B cell (primary cell): ENCODE measurements at regions of chr14 and their contacts with region 1.

Region 1: GRCh38 chr14:100213956-100214774 is 24.8 kb upstream of the YY1 start:
- DNase-seq: peak; percentile 92
- ATAC-seq: peak; percentile 96
- H3K4me3 ChIP-seq: peak overlapping the region; percentile 17 to 91 (median 90)
- H3K4me3 Mint-ChIP-seq: peak overlapping the region; percentile 87
- H3K27ac ChIP-seq: peak overlapping the region; percentile 77 to 78
- H3K27ac Mint-ChIP-seq: peak overlapping the region; percentile 89
- H3K4me1 ChIP-seq: peaks cover 12 to 15% of the 10 kb centered on the region in 2 donors
- H3K4me1 Mint-ChIP-seq: peaks cover 16% of the 10 kb centered on the region
- H3K27me3 ChIP-seq: no peaks in the 10 kb centered on the region
- H3K27me3 Mint-ChIP-seq: no peaks in the 10 kb centered on the region
- CTCF ChIP-seq: no peak

Region 2: GRCh38 chr14:100049220-100049619 is 164.9 kb before region 1 on chr14:
- CTCF ChIA-PET with region 1: no interaction called
- POLR2A ChIA-PET with region 1: no interaction called
- intact Hi-C with region 1: no loop called
- DNase-seq: no peak
- ATAC-seq: no peak
- H3K4me3 ChIP-seq: no peak overlapping the region
- H3K4me3 Mint-ChIP-seq: no peak overlapping the region
- H3K27ac ChIP-seq: no peak overlapping the region
- H3K27ac Mint-ChIP-seq: no peak overlapping the region
- H3K4me1 ChIP-seq: no peaks in the 10 kb centered on the region
- H3K4me1 Mint-ChIP-seq: no peaks in the 10 kb centered on the region
- H3K27me3 ChIP-seq: no peaks in the 10 kb centered on the region
- H3K27me3 Mint-ChIP-seq: no peaks in the 10 kb centered on the region
- CTCF ChIP-seq: no peak

Region 3: GRCh38 chr14:100155042-100155846 is 58.9 kb before region 1 on chr14:
- CTCF ChIA-PET with region 1: no interaction called
- POLR2A ChIA-PET with region 1: no interaction called
- intact Hi-C with region 1: loop called (anchors 1 kb)
- DNase-seq: no peak
- ATAC-seq: no peak
- H3K4me3 ChIP-seq: no peak overlapping the region
- H3K4me3 Mint-ChIP-seq: no peak overlapping the region
- H3K27ac ChIP-seq: no peak overlapping the region
- H3K27ac Mint-ChIP-seq: peak overlapping the region; percentile 53
- H3K4me1 ChIP-seq: peaks cover 29 to 39% of the 10 kb centered on the region in 2 donors
- H3K4me1 Mint-ChIP-seq: peaks cover 33% of the 10 kb centered on the region
- H3K27me3 ChIP-seq: peaks cover 0 to 2% (median 0%) of the 10 kb centered on the region in 4 experiments
- H3K27me3 Mint-ChIP-seq: no peaks in the 10 kb centered on the region
- CTCF ChIP-seq: peak; percentile 65

Region 4: DNA sequence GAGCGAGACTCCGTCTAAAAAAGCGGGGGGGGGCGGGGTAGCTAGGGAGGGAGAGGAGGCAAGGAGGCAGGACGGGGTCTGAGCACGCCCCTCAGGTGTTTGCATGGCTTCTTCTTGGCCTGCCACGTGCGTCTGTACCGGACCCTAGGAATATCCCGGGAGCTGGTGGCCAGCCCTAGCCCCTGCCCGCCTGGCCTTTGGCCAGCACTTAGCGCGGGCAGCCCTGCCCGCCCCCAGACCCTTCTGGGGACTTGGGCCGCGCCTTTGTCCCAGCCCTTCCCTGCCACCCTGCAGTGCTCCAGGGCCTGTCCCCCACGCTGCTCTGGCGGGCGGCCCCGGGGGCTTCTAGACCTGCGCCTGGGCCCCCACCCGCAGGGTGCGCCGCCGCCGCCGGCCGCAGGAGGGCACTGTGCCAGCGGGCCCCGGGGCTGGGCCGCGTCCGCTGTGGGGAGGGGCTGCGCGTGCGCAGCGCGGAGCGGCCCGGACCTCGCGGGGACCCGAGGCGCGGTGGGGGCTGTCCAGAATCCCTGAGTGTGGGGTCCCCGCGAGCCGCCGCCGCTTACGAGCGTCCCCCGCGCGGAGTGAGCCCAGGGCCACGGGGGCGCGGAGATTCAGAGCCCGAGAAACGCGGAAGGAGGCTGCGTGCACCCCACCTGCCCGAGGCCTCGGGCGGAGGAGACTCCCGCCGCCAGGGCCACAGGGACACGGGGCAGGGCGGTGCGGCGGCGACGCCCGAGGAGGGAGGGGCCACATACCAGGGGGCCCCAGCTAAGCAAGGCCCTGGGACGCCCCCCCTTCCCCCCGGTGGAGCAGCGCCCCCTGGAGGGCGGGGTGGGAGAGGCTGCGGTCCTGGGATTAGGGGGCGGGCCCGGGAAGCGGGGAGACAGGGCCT is 71.1 kb after region 1 on chr14:
- CTCF ChIA-PET with region 1: no interaction called
- POLR2A ChIA-PET with region 1: no interaction called
- intact Hi-C with region 1: no loop called
- DNase-seq: peak; percentile 89
- ATAC-seq: peak; percentile 91
- H3K4me3 ChIP-seq: peak overlapping the region in 4 of 5 experiments; percentile 74 to 89 (median 82)
- H3K4me3 Mint-ChIP-seq: peak overlapping the region; percentile 84
- H3K27ac ChIP-seq: peak overlapping the region; percentile 80 to 90
- H3K27ac Mint-ChIP-seq: peak overlapping the region; percentile 79
- H3K4me1 ChIP-seq: peaks cover 12% of the 10 kb centered on the region in 2 donors
- H3K4me1 Mint-ChIP-seq: peaks cover 13% of the 10 kb centered on the region
- H3K27me3 ChIP-seq: no peaks in the 10 kb centered on the region
- H3K27me3 Mint-ChIP-seq: no peaks in the 10 kb centered on the region
- CTCF ChIP-seq: peak; percentile 99